ENCODE measurements at regions of chr2 and their contacts with region 1.

Region 1: DNA sequence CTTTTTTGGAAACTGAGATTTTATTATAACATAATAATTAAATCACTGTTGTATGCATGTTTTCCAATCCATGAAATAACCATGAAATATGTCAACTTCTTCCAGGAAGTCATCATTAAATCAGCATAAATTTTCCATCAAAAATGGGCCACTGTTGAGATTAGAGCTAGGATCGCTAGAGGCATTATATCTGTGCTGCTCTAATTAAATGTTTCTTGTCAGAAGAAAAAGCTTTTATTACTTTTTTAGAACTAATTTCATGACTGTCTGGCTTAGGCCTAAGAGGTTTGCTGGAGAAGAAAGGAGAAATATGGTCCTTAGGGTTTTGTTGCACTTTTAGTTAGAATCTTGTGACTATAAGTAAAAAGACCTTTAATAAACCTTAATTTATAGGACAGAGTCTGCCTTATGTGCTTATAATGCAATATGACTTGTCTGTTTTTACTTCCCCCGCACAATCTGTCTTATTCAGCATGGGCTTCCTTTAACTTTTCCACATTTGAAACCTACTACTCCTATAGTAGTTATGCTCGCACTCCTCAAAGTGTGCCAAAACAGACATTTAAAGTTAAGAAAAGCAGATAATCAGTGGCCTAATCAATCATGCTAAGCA is 363.4 kb upstream of the GCFC2 start:
- DNase-seq: no peak

Region 2: GRCh38 chr2:76044701-76045100 is 29.4 kb before region 1 on chr2:
- intact Hi-C with region 1: no loop called
- DNase-seq: no peak

Region 3: DNA sequence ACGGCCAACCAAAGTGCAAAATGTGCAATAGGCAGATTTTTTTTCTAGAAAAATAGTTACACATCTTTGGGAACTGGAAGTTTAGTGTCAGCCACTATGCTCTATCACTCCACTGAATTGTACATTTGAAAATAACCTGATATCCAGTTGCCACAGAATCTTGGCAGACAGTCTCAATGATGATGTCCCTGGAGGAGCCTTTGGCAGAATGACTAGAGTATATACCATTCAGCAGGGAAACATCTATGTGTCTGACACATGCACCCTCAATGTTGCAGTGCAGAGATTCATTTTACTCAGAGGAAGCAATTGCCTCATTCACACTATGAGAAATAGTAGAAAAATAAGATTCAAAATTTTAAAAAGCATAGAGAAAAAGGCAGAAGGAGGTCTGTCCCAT is 972.2 kb after region 1 on chr2:
- intact Hi-C with region 1: loop called in 1 of 2 experiments (anchors 5 kb)
- DNase-seq: no peak